Gastrocnemius medialis (tissue), 4 donors: ENCODE measurements at regions of chr17 and their contacts with region 1.

Region 1: DNA sequence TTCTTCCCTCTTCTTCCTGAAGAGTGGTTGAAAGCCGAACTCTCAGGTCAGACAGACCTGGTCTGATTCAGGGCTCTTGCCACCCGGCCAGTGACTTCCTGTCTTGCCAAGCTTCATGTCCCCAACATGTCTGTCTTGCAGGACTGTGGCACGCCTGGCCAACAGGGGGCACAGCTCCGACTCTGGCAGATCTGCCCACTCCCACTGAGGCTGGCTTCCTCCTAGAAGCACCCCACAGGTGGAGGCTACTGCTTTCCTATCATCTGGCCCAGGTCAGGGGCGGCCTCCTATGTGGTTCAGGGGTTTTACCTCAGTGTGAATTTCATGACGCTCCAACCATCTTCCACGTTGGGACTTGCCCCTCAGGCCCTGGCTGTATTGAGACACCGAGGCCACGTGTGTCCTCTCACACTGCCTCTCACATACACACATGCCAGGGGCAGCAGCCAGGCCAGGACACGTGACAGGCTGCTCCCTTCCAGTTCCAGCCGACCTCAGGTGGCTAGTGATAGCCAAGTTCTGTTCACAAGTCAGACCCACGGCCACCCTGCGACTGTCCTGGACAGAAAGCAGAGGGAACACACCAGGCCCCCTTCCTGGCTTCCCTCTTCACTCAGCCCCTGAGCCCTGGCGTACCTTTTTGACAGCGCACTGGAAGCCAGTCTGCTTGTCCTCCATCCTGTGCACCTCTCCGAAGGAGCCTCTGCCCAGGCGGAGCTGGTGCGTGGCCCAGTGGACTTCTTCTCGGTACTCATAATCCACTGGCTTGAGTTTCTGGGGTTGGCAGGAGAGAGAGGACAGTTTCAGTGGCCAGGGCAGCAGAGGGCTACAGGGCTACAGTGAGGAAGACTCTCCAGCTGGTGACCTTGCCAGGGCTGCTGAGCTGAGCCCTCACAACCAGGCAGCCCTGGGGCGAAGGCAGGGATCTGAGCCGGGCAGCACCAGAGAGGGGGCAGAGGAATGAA is 22.6 kb upstream of the SPATA32 start:
- DNase-seq: peak; percentile 94 to 98
- ATAC-seq: peak; percentile 64 to 65
- H3K4me3 ChIP-seq: no peak overlapping the region
- H3K27ac ChIP-seq: peak overlapping the region; percentile 88 to 100 (median 97)
- H3K4me1 ChIP-seq: peaks cover 67 to 75% of the 10 kb centered on the region in 2 donors
- H3K27me3 ChIP-seq: no peaks in the 10 kb centered on the region
- CTCF ChIP-seq: peak; percentile 36 to 54 (median 52)
- POLR2A ChIP-seq: peak; percentile 68 to 73

Region 2: GRCh38 chr17:45305532-45306087 is 21.2 kb after region 1 on chr17:
- in situ Hi-C with region 1: loop called in 1 of 4 experiments (anchors 5 kb)
- intact Hi-C with region 1: loop called (anchors 2 kb)
- DNase-seq: peak in 1 of 2 donors; percentile 71
- ATAC-seq: peak; percentile 63 to 65
- H3K4me3 ChIP-seq: no peak overlapping the region
- H3K27ac ChIP-seq: peak overlapping the region; percentile 88 to 98 (median 94)
- H3K4me1 ChIP-seq: peaks cover 83 to 92% of the 10 kb centered on the region in 2 donors
- H3K27me3 ChIP-seq: no peaks in the 10 kb centered on the region
- CTCF ChIP-seq: no peak
- POLR2A ChIP-seq: peak; percentile 27 to 42

Region 3: DNA sequence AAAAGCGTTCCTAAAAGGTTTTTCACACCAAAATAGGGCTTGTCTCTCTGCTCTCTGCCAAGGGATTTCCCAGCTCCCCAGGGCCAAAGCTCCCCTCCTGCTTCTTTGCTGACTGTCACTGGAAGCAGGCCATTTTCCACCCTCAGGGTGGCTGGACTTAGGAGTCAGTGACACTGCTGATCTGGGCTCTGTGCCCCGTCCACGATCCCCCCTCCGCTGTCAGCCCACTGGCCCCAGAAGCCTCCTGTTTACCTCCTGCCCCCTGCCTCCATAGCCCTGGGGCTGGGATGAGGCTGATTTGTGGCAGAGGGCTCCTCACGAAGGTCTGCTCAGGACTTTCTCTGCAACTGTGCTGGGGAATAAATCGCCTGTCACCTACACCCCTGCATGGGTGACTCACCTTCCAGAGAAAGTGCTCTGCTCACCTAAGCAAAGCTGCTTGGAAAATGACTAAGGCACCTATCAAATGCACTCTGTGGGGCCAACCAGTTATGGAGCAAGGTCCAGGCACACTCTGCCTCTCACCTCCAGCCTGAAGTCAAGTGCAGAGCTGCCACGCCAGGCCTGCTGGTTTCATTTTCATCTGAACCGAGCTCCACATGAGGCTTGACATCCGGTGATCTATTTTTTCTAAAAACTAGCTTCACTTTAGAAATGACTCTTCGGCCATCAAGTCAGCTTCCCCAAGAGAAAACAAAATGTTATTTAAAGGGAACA is 27.5 kb after region 1 on chr17:
- in situ Hi-C with region 1: loop called in 2 of 4 experiments (anchors 5 kb)
- intact Hi-C with region 1: loop called (anchors 1 kb)
- DNase-seq: peak; percentile 92 to 96
- ATAC-seq: peak; percentile 67 to 72
- H3K4me3 ChIP-seq: peak overlapping the region; percentile 3 to 50 (median 30)
- H3K27ac ChIP-seq: peak overlapping the region; percentile 88 to 98 (median 94)
- H3K4me1 ChIP-seq: peaks cover 86 to 91% of the 10 kb centered on the region in 2 donors
- H3K27me3 ChIP-seq: no peaks in the 10 kb centered on the region
- CTCF ChIP-seq: peak in 1 of 5 experiments; percentile 2
- POLR2A ChIP-seq: peak; percentile 80 to 89